Activated CD4-positive, alpha-beta T cell treated with anti-CD3 and anti-CD28 coated beads, Interleukin-2, amount 10 ng/mL, durations not matched to agents 7 days and 5 days (primary cell): ENCODE measurements at regions of chr3 and their contacts with region 1.

Region 1: DNA sequence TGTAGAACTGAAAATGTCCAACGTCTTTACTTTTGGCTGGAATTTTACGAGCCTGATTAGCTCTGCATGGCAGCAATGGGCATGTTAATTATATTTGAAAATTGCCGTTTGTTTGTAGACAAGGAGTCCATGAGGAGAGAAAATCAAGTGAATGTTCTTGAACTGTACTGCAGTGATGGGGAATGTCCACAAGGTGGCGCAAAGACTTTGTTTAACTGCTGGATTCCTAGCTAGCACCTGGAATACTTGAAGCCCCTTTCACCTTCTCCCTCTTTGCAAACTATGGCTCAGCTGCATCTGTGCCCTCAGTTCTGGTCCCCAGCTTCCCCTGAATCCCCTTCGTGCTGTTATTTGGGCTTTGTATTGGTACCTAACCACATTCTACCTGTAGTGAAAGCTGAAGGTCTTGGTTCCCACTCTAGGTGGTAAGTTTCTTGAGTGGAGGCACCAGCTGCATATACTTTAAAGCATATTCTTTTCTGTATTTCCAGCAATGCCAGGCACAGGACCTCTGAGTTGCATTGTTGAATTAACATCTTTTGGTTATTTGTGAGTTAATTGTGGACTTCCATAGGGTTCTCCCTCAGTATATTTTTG is 25.3 kb downstream of the EXOG start:
- DNase-seq: peak; percentile 72
- H3K4me3 Mint-ChIP-seq: no peak overlapping the region
- H3K27ac Mint-ChIP-seq: no peak overlapping the region
- H3K4me1 Mint-ChIP-seq: peaks cover 35% of the 10 kb centered on the region
- H3K27me3 Mint-ChIP-seq: no peaks in the 10 kb centered on the region

Region 2: GRCh38 chr3:38374221-38374620 is 147.3 kb before region 1 on chr3:
- CTCF ChIA-PET with region 1: no interaction called
- POLR2A ChIA-PET with region 1: no interaction called
- DNase-seq: peak; percentile 63
- H3K4me3 Mint-ChIP-seq: peak overlapping the region; percentile 44
- H3K27ac Mint-ChIP-seq: peak overlapping the region; percentile 61
- H3K4me1 Mint-ChIP-seq: peaks cover 36% of the 10 kb centered on the region
- H3K27me3 Mint-ChIP-seq: no peaks in the 10 kb centered on the region

Region 3: DNA sequence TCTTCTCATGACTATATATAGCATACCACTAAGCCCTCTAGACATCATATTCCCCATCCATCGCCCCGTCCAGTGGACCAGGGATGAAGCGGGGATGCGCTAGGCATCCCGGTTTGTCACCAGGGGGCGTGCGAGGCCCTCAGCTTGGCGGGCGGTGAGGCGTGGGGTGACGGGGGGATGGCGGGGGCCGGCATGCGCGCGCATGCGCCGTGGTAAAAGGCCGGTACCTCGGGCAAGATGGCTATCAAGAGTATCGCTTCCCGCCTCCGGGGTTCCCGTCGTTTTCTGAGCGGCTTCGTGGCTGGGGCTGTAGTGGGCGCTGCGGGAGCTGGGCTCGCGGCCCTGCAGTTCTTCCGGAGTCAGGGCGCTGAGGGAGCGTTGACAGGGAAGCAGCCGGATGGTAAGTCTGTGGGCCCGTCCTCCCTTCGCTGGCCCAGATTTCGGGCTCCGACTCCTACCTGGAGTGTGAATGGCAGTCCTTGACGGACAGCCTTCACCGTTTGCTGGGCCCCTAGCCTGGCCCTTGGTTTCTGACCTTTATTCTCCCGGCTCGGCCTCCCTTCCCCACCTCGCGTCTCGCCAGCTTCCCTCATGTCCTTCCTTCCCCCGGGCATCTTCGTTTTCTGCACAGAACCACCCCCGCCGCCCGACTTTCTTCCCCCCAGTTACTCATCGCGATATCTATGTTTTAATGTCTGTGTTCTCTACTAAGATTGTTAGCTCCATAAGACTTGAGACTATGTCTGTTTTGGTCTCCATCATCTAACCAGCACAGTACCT is 25.2 kb before region 1 on chr3 and contains the start of gene EXOG:
- CTCF ChIA-PET with region 1: interaction called, 10 read pairs
- POLR2A ChIA-PET with region 1: no interaction called
- DNase-seq: peak; percentile 96
- H3K4me3 Mint-ChIP-seq: peak within 1 kb of the TSS; percentile 98
- H3K27ac Mint-ChIP-seq: peak within 1 kb of the TSS; percentile 93
- H3K4me1 Mint-ChIP-seq: peaks cover 21% of the 10 kb centered on the region
- H3K27me3 Mint-ChIP-seq: no peaks in the 10 kb centered on the region
- total RNA-seq, gene EXOG: 25.5 to 28.1 TPM